AG04450 (cell line): ENCODE measurements at regions of chr4 and their contacts with region 1.

Region 1: DNA sequence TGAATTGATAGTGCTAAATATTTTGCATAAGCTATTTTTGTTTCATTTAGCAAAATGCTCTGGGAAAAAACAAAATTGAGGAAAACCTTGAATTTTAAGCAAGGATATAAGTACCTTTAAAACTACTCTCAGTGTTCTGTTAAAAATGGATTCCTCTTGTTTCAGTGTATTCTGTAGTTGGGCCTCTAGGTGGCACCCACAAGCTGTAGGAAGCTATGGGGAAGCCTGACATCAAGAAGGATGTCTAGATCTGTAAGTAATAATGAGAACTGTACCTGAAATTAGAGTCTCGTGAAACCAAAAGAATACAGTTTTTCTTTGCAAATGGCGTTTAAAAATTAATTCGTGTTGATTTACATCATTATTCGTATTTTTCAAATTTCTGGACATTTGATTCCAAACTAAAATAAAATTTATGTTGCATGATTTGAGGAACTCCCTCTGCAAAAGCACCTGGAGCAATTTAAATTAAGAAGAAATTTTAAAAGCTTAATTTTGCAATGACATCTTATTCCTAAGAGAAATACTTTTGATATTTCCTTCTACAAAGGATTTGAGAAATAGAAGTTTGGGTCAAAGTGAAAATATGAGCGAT is 51.2 kb downstream of the TMPRSS11E start:
- DNase-seq: peak; percentile 37
- H3K4me3 ChIP-seq: no peak overlapping the region
- H3K27ac ChIP-seq: no peak overlapping the region
- H3K27me3 ChIP-seq: no peaks in the 10 kb centered on the region
- CTCF ChIP-seq: peak; percentile 95

Region 2: GRCh38 chr4:68271851-68272756 is 226.4 kb before region 1 on chr4:
- CTCF ChIA-PET with region 1: interaction called, 26 read pairs
- POLR2A ChIA-PET with region 1: no interaction called
- DNase-seq: peak; percentile 30
- H3K4me3 ChIP-seq: peak overlapping the region; percentile 49
- H3K27ac ChIP-seq: no peak overlapping the region
- H3K27me3 ChIP-seq: no peaks in the 10 kb centered on the region
- CTCF ChIP-seq: peak; percentile 73

Region 3: DNA sequence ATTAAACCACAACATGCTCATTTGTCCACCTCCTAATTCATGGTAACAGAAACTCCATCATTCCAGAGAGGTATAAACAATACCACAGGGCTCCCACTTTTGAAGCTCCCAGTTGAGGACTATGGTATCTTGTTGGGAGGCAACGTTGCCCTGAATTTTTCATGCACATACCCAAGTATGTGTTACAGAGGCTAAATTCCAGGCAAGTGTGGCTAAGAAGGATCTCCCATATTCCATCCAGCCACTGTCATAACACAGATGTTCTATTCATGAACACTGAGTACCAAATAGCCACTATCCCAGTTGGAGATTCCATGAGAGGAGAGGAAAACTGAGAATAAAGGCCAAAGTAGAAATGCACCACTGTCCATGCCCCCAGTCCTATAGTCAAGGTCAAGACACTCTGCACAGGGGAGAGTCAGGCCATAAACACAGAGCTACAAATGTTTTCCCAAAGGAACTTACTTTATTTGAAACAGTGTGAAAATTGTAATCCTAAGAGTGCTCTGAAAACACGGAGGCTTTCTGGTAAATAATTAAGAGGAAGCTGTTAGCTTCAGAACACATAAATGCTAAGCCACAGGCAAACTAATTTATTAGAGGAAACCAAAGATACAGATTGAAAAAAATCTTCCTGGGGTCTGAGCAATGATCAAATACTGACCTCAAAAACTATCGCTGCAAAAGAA is 210.7 kb before region 1 on chr4:
- CTCF ChIA-PET with region 1: no interaction called
- POLR2A ChIA-PET with region 1: no interaction called
- DNase-seq: no peak
- H3K4me3 ChIP-seq: no peak overlapping the region
- H3K27ac ChIP-seq: no peak overlapping the region
- H3K27me3 ChIP-seq: no peaks in the 10 kb centered on the region
- CTCF ChIP-seq: no peak

Region 4: GRCh38 chr4:68462691-68463090 is 35.8 kb before region 1 on chr4:
- CTCF ChIA-PET with region 1: interaction called, 10 read pairs
- POLR2A ChIA-PET with region 1: no interaction called
- DNase-seq: no peak
- H3K4me3 ChIP-seq: no peak overlapping the region
- H3K27ac ChIP-seq: no peak overlapping the region
- H3K27me3 ChIP-seq: no peaks in the 10 kb centered on the region
- CTCF ChIP-seq: no peak

Region 5: DNA sequence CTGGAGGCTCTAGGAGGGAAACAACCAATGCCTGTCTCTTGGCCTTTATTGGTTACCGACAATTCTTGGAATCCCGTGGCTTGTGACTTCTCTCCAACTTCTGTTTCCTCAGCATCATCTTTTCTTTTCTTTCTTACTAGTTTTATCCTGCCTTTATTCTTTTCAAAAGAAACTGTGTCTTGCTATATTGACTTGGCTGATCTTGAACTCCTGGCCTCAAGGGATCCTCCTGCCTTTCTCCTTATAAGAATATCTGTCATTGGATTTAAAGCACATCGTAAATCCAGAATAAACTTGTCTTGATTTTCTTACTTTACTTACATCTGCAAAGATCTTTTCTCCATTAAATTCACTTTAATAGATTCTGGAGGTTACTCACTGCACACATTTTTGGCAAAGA is 267.4 kb after region 1 on chr4:
- CTCF ChIA-PET with region 1: no interaction called
- POLR2A ChIA-PET with region 1: no interaction called
- DNase-seq: no peak
- H3K4me3 ChIP-seq: no peak overlapping the region
- H3K27ac ChIP-seq: no peak overlapping the region
- H3K27me3 ChIP-seq: no peaks in the 10 kb centered on the region
- CTCF ChIP-seq: no peak

Region 6: GRCh38 chr4:69167300-69167699 is 668.8 kb after region 1 on chr4:
- CTCF ChIA-PET with region 1: interaction called, 55 read pairs
- POLR2A ChIA-PET with region 1: no interaction called
- DNase-seq: no peak
- H3K4me3 ChIP-seq: no peak overlapping the region
- H3K27ac ChIP-seq: no peak overlapping the region
- H3K27me3 ChIP-seq: no peaks in the 10 kb centered on the region
- CTCF ChIP-seq: no peak